ENCODE measurements at regions of chr7 and their contacts with region 1.

Region 1: GRCh38 chr7:149624419-149625339 is 127.1 kb upstream of the ZNF746 start:
- H3K4me3 ChIP-seq: peak overlapping the region; percentile 60
- H3K27ac ChIP-seq: peak overlapping the region; percentile 69
- H3K4me1 ChIP-seq: peaks cover 3% of the 10 kb centered on the region; the same call in 1 of the 2 replicates
- CTCF ChIP-seq: peak; percentile 87

Region 2: GRCh38 chr7:149573519-149573918 is 51.2 kb before region 1 on chr7:
- CTCF ChIA-PET with region 1: no interaction called
- POLR2A ChIA-PET with region 1: no interaction called
- H3K4me3 ChIP-seq: no peak overlapping the region
- H3K27ac ChIP-seq: no peak overlapping the region
- H3K4me1 ChIP-seq: no peaks in the 10 kb centered on the region
- CTCF ChIP-seq: no peak

Region 3: DNA sequence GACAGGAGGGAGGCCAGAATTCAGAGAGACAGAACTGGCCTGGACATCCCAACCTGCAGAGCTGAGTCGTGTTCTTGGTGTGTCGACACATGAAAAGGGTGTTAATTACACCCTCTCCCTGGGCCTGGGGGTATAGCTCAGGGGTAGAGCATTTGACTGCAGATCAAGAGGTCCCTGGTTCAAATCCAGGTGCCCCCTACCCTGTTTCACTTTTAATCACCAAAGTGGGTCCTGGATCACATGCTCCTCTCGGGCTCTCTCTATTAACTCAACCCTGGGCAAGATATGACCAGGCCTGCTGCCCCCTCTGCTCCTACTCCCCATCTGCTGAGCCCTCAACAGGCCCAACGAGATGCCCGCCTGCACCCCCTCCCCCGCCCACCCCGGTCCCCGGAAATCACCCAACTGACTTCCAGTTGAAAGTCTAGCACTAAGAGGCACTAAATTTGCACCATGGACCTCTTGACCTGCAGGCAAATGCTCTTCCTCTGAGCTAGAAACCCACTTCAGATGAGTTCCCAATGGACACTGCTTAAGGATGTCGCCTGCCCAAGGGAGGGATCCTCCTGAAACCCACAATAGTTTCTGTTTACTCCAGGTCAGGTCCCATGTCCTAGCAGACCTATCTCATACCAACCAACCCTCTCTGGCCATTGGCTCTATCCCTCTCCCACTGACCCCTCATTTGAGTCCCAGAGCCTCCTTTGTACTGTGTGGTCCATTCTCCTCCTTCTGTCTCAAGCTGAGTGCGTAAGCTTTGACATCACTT is 11.1 kb after region 1 on chr7:
- CTCF ChIA-PET with region 1: interaction called, 15 read pairs
- POLR2A ChIA-PET with region 1: interaction called, 14 read pairs
- H3K4me3 ChIP-seq: no peak overlapping the region
- H3K27ac ChIP-seq: no peak overlapping the region
- H3K4me1 ChIP-seq: no peaks in the 10 kb centered on the region
- CTCF ChIP-seq: no peak

Measured in HEK293 (cell line).